ENCODE measurements at regions of chr1 and their contacts with region 1.

Region 1: DNA sequence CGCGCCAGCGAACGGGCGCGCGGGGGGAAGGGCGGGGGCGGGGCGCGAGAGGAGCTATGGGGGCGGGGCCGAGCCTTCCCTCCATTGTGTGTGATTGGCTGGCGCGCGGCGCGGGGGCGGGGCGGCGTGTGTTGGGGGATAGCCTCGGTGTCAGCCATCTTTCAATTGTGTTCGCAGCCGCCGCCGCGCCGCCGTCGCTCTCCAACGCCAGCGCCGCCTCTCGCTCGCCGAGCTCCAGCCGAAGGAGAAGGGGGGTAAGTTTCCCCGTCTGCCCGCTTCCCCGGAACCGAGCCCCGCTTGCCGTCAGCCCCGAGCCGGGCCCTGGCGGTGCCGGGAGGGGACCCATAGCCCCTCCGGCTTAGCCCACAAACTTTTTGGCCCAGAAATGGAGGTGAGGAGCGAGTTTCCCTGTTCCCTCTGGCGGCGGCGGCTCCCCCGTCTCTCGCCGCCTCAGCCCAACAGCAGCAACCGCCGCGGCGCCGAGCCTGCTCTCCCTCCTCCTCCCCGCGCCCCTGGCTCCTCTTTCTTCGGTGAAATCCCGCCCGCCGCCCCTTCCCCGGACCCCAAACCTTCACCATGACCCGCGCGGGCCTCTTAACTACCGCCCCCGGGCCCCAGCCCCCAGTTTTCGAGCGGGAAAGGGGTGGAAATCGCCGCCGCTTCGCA is at the start of gene H3-3A:
- DNase-seq: peak; percentile 98
- H3K4me3 ChIP-seq: peak within 1 kb of the TSS; percentile 73 to 95
- H3K27ac ChIP-seq: peak within 1 kb of the TSS; percentile 100
- H3K4me1 ChIP-seq: peaks cover 17% of the 10 kb centered on the region
- H3K27me3 ChIP-seq: no peaks in the 10 kb centered on the region
- CTCF ChIP-seq: peak in 1 of 3 experiments; percentile 21
- POLR2A ChIP-seq: peak; percentile 76
- total RNA-seq, gene H3-3A: 272 to 367 TPM

Region 2: GRCh38 chr1:225817611-225818061 is 245.1 kb before region 1 on chr1:
- intact Hi-C with region 1: no loop called
- DNase-seq: peak; percentile 91
- H3K4me3 ChIP-seq: no peak overlapping the region
- H3K27ac ChIP-seq: peak overlapping the region; percentile 87 to 89
- H3K4me1 ChIP-seq: peaks cover 82% of the 10 kb centered on the region
- H3K27me3 ChIP-seq: no peaks in the 10 kb centered on the region
- CTCF ChIP-seq: no peak
- POLR2A ChIP-seq: no peak

Region 3: DNA sequence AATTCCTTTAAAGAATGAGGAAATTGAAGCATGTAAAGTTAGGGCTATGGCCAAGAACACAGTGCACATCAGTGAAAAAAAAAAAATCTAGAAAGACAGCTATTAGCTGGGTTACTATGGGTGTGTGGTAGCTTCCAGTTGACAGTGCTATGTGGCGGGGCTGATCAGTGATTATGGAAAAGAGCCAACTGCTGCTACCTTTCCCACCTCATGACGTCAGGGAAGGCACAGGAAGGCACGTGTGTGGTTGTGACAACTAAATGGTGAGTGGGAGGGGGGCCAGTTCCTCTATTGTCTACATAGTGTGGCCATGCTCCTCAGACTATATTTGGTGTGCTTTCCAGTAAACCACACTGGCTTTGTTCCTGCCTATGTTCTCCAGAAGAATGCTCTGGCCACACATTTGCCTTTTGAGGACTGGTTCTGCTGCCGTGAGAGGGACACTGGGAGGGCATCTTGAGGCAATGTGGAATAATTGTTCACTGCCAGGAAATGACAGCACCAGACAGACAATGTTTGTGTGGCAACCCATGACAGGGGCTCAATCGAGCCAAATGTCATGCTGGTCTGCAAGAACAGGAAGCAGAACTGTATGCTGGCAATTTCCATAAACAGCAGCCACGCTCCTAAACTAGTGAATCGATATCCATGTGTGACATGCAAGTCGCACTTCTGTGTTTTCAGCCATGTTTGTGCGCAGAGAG is 60.6 kb before region 1 on chr1:
- intact Hi-C with region 1: loop called (anchors 5 kb)
- DNase-seq: peak; percentile 71
- H3K4me3 ChIP-seq: no peak overlapping the region
- H3K27ac ChIP-seq: peak overlapping the region; percentile 13 to 97
- H3K4me1 ChIP-seq: peaks cover 5% of the 10 kb centered on the region
- H3K27me3 ChIP-seq: no peaks in the 10 kb centered on the region
- CTCF ChIP-seq: no peak
- POLR2A ChIP-seq: no peak

Region 4: DNA sequence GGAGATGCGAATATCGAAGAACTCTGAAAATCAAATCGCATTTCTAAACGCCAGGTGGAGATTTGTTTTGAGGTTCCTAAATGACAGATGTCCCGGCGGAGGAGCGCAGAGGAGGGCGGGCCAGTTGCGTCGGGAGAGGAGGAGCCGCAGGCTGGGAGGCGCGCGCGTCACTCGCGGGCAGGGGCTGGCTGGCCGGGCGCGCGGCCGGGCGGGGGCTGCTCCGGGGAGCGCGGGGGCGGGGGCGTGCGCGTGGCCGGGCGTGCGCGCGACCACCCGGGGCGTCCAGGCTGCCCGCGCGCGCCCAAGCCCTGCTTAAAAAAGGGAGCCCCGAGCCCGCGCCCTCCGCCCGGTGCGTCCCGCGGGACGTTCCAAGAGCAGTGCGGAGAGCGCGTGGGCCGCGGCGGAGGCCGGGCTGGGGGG is 47.1 kb after region 1 on chr1:
- intact Hi-C with region 1: loop called (anchors 5 kb)
- DNase-seq: peak; percentile 94
- H3K4me3 ChIP-seq: peak overlapping the region; percentile 80 to 84
- H3K27ac ChIP-seq: peak overlapping the region; percentile 96 to 97
- H3K4me1 ChIP-seq: peaks cover 26% of the 10 kb centered on the region
- H3K27me3 ChIP-seq: no peaks in the 10 kb centered on the region
- CTCF ChIP-seq: no peak
- POLR2A ChIP-seq: no peak

Region 5: GRCh38 chr1:226121587-226122400 is 59.1 kb after region 1 on chr1:
- intact Hi-C with region 1: loop called (anchors 5 kb)
- DNase-seq: peak; percentile 71
- H3K4me3 ChIP-seq: peak overlapping the region; percentile 66 to 73
- H3K27ac ChIP-seq: peak overlapping the region; percentile 55 to 77
- H3K4me1 ChIP-seq: peaks cover 13% of the 10 kb centered on the region
- H3K27me3 ChIP-seq: no peaks in the 10 kb centered on the region
- CTCF ChIP-seq: peak; percentile 83 to 95 (median 90)
- POLR2A ChIP-seq: no peak